Heart right ventricle (tissue), 16 donors: ENCODE measurements at regions of chr6 and their contacts with region 1.

Region 1: DNA sequence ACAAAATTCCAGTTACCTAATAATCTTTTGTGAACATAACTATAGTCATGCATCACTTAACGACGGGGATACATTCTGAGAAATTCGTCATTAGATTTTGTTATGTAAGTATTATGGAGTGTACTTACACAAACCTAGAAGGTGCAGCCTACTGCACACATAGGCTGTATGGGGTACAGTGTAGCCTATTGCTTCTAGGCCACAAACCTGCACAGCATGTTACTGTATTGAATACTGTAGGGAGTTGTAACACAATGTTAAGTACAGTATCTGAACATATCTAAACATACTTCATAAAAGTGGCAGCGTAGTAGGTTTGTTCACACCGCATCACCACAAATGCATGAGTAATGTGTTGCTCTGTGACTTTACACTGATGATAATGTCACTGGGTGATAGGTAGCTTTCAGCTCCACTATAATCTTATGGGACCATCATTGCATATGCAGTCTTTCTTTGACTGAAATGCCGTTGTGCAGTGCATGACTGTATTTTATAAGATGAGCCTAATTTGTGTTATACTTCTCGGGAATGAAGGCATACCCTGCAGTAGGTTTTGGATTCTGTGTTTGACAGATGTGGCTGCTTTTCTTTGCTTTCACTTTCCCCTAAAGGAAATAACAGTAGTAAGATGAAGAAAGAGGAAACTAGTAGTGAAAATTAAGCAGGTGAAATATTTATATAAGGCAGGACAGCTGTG is 365.6 kb downstream of the FARS2 start:
- DNase-seq: no peak
- ATAC-seq: no peak
- H3K4me3 ChIP-seq: no peak overlapping the region
- H3K27ac ChIP-seq: no peak overlapping the region
- H3K4me1 ChIP-seq: peaks cover 0 to 22% (median 7%) of the 10 kb centered on the region in 9 donors
- H3K27me3 ChIP-seq: no peaks in the 10 kb centered on the region
- CTCF ChIP-seq: no peak

Region 2: DNA sequence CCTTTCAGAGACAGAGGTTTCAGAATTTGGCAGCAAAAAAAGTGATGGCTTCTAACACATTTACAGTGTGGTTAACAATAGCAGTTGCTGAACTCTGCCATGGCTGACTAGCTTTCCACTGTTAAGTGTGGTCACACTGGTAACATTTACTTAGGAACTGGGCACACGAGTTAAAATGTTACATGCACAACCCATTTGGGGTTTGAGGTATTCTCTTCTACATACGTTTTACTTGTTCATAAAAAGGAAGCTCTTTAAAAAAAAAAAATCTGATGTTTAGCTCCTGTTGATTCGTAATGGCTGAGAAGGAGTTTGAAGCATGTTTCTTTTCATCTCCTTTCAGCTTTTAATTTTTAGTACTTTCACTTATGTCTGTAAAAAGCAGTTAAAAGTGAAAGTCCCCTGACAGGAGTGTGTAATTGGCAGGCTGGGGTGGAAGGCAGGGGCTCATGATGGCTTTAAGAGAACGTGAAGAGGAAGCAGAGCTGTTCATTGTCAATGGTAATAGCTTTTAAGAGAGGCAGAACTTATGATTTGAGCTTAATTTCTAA is 119.7 kb before region 1 on chr6:
- intact Hi-C with region 1: loop called in 1 of 10 experiments (anchors 10 kb)
- DNase-seq: no peak
- ATAC-seq: no peak
- H3K4me3 ChIP-seq: no peak overlapping the region
- H3K27ac ChIP-seq: no peak overlapping the region
- H3K4me1 ChIP-seq: peaks cover 0 to 8% (median 0%) of the 10 kb centered on the region in 9 donors
- H3K27me3 ChIP-seq: no peaks in the 10 kb centered on the region
- CTCF ChIP-seq: no peak